Left cardiac atrium (tissue), 4 donors: ENCODE measurements at regions of chr11 and their contacts with region 1.

Region 1: GRCh38 chr11:77547863-77548551 is 41.7 kb upstream of the AQP11 start:
- DNase-seq: no peak
- ATAC-seq: peak in 1 of 2 donors; percentile 51

Region 2: DNA sequence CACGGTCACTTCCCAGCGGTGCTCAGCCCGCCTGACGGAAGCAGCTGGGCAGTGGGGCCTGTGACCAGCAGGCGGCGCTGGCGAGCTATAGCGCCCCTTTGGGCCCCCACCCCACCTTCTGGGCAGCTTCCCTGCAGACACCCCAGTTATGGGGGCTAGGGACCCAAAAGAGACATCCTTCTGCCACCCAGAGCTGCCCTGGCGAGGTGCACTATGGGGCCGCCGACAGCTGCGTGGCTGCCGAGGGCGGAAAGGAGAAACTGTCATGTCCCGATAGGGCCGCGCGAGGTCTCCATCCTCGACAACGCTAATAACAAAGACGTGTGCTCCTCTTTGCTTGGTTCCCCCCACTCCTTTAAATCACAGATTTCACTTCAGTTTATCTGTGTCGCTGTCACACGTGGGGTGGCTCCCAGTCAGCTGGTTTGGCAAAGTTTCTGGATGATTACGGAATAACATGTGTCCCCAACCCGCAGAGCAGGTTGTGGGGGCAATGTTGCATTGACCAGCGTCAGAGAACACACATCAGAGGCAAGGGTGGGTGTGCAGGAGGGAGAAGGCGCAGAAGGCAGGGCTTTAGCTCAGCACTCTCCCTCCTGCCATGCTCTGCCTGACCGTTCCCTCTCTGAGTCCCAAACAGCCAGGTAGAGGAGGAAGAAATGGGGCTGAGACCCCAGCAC is 420.6 kb before region 1 on chr11:
- intact Hi-C with region 1: loop called in 1 of 2 experiments (anchors 5 kb)
- DNase-seq: peak; percentile 58
- ATAC-seq: peak; percentile 65 to 75

Region 3: DNA sequence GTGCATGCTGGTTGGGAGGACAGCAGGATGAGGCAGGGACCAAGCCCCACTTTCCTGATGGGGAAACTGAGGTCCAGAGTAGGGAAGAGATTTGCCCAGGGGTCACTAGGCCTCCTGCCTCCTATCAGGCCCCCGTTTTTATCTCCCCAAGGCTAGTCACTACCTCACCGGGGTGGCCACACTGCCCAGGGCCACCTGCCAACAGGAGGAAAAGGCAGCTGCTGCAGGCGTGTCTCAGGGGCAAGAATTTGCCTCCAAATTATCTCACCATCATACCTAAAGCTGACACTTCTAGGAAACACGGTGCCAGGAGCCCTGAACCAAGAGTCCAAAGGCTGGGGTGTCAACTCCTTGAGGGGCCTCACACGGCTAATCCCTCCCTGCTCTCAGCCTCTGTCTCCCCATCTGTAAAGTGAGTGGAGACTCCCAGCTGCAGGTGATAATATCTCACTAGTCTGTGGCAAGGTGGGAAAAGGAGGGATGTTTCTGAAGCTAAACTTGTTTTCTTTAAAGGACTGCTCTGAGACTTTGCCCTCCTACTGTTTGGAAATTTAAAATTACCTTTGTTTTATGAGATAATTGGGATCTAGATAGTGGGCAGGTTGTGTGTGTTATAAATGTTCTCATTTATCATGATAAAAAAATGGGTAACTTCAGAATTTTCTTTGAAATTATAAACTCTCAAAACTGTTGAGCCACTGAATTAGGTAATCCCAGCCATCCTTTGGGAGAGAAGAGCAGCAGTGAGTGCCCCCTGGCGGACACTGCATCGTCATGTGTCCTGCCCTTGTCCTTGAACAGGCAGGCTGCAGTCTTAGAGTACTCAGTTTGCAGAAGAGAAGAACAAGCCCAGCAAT is 360.0 kb before region 1 on chr11:
- intact Hi-C with region 1: loop called in 1 of 2 experiments (anchors 2 kb)
- DNase-seq: peak; percentile 88
- ATAC-seq: peak; percentile 79 to 93

Region 4: GRCh38 chr11:77205467-77206263 is 342.3 kb before region 1 on chr11:
- intact Hi-C with region 1: loop called in 1 of 2 experiments (anchors 5 kb)
- DNase-seq: no peak
- ATAC-seq: no peak

Region 5: GRCh38 chr11:77287615-77288273 is 260.3 kb before region 1 on chr11:
- intact Hi-C with region 1: no loop called
- DNase-seq: no peak
- ATAC-seq: no peak

Region 6: GRCh38 chr11:77467993-77468392 is 80.0 kb before region 1 on chr11:
- intact Hi-C with region 1: no loop called
- DNase-seq: no peak
- ATAC-seq: no peak

Region 7: DNA sequence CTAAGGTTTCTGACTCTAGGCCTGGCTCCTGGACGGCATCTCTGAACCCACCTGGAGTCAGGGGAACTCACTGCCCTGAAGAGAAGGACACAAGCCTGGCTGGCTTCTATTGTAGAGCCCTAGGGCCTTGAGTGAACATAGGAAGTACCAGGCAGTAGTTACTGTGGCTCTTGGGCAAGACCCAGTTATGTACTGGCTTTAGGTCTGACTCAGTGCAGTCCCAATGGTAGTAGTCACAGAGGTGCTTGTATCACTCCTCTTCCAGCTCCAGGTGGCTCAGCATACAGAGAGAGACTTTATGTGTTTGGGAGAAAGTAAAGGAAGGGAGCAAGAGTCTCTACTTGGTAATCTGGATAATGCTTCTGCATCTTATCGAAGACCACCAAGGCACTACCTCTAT is 60.2 kb before region 1 on chr11:
- intact Hi-C with region 1: no loop called
- DNase-seq: no peak
- ATAC-seq: no peak

Region 8: GRCh38 chr11:77506857-77507256 is 41.1 kb before region 1 on chr11:
- intact Hi-C with region 1: no loop called
- DNase-seq: no peak
- ATAC-seq: no peak